ENCODE measurements at regions of chr9 and their contacts with region 1.

Region 1: DNA sequence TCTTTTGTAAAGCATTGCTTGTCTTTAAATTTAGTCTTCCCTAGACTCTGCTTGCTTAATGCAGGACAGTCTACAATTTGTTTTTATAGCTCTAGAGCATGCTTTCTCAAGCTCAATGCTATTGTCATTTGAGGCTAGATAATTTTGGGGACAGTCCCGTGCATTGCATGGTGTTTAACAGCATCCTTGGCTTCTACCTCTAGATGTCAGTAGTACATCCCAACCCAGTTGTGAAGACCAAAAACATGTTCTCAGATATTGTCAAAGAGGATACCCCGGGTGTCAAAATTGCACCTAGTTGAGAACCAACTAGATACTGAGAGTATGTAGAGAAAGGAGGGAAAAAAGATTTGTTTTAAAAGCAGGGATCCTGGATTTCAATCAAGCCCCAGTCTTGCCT is 277.5 kb downstream of the CEMIP2 start:
- DNase-seq: no peak
- H3K4me3 ChIP-seq: no peak overlapping the region
- H3K4me3 Mint-ChIP-seq: no peak overlapping the region
- H3K27ac Mint-ChIP-seq: no peak overlapping the region
- H3K4me1 ChIP-seq: no peaks in the 10 kb centered on the region
- H3K4me1 Mint-ChIP-seq: no peaks in the 10 kb centered on the region
- H3K27me3 ChIP-seq: no peaks in the 10 kb centered on the region
- H3K27me3 Mint-ChIP-seq: peaks cover 3% of the 10 kb centered on the region
- CTCF ChIP-seq: no peak

Region 2: GRCh38 chr9:71710856-71711255 is 220.0 kb after region 1 on chr9:
- CTCF ChIA-PET with region 1: no interaction called
- POLR2A ChIA-PET with region 1: no interaction called
- intact Hi-C with region 1: loop called (anchors 5 kb)
- DNase-seq: no peak
- H3K4me3 ChIP-seq: no peak overlapping the region
- H3K4me3 Mint-ChIP-seq: no peak overlapping the region
- H3K27ac Mint-ChIP-seq: no peak overlapping the region
- H3K4me1 ChIP-seq: no peaks in the 10 kb centered on the region
- H3K4me1 Mint-ChIP-seq: no peaks in the 10 kb centered on the region
- H3K27me3 ChIP-seq: no peaks in the 10 kb centered on the region
- H3K27me3 Mint-ChIP-seq: no peaks in the 10 kb centered on the region
- CTCF ChIP-seq: no peak

Measured in Caco-2 (cell line).